Pancreas (tissue), 10 donors: ENCODE measurements at regions of chr7 and their contacts with region 1.

Region 1: DNA sequence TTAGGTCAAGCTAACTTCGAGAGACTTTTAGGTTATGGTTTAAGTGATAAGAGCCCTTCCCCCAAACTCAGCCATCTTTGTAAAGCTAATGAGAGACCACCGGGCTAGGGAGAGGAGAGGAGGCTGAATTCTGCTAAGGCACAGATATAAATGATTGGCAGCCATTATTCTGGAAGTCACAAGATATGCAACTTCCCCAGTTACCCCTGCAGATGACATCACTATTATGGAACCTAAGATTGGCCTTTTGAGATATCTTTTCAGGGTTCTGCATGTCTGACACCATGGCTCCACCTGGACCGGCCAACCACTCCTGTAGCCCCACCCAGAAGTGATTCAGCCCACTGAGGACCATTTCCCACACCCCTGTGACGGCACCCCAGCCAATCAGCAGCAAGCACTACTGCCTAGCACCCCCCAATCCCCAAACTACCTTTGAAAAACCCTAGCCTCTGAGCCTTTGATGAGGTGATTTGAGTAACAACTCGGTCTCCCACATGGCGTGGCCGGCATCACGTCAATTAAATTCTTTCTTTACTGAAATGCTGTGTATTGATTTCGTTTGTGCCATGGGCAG is 14.4 kb downstream of the VIPR2 start:
- DNase-seq: no peak
- ATAC-seq: no peak
- H3K4me3 ChIP-seq: no peak overlapping the region
- H3K27ac ChIP-seq: no peak overlapping the region
- H3K4me1 ChIP-seq: no peaks in the 10 kb centered on the region
- H3K27me3 ChIP-seq: no peaks in the 10 kb centered on the region
- CTCF ChIP-seq: no peak

Region 2: GRCh38 chr7:159144758-159145489 is 14.6 kb after region 1 on chr7 and contains the start of gene VIPR2:
- intact Hi-C with region 1: no loop called
- DNase-seq: peak in 4 of 6 donors; percentile 37 to 71 (median 52)
- ATAC-seq: peak; percentile 66 to 79 (median 76)
- H3K4me3 ChIP-seq: peak within 1 kb of the TSS; percentile 11 to 72 (median 60)
- H3K27ac ChIP-seq: no peak within 1 kb of the TSS
- H3K4me1 ChIP-seq: no peaks in the 10 kb centered on the region
- H3K27me3 ChIP-seq: no peaks in the 10 kb centered on the region
- CTCF ChIP-seq: no peak
- total RNA-seq, gene VIPR2: 3.7 to 13.7 (median 11.3) TPM

Region 3: DNA sequence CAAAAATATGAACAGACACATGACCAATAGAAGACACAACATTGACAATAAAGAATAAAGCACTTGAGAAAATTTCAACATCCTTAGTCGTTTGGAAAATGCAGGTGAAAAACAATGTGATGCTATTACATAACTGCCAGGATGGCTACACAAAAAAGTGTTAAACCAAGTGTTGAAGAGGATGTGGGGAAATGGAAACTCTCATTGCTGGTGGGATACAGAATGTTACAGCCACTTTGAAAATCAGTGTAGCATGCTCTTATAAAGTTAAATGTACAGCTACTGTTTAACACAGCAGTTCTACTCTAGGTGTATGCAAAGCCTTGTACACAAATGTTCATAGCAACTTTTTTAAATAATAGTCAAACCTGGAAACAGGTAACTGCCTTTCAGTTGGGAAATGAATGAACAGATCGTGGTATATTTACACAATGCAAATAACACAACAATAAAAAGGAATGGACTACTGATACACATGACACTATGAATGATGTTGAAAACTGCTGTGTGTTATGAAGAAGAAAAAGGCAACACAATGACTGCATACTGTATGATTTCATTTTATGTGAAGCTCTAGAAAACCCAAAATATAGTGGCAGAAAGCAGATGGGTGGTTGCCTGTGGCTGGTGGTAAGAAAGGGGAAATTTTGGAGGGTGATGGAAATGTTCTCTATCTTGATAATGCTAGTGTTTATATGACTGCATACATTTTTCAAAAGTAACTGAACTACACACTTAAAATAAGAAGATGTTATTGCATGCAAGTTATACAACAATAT is 116.6 kb after region 1 on chr7:
- intact Hi-C with region 1: loop called in 1 of 3 experiments (anchors 5 kb)
- DNase-seq: no peak
- ATAC-seq: no peak
- H3K4me3 ChIP-seq: no peak overlapping the region
- H3K27ac ChIP-seq: no peak overlapping the region
- H3K4me1 ChIP-seq: no peaks in the 10 kb centered on the region
- H3K27me3 ChIP-seq: no peaks in the 10 kb centered on the region
- CTCF ChIP-seq: no peak